Activated B cell treated with CpG ODN at 0.5 μM for 24 hours (primary cell): ENCODE measurements at regions of chr6 and their contacts with region 1.

Region 1: DNA sequence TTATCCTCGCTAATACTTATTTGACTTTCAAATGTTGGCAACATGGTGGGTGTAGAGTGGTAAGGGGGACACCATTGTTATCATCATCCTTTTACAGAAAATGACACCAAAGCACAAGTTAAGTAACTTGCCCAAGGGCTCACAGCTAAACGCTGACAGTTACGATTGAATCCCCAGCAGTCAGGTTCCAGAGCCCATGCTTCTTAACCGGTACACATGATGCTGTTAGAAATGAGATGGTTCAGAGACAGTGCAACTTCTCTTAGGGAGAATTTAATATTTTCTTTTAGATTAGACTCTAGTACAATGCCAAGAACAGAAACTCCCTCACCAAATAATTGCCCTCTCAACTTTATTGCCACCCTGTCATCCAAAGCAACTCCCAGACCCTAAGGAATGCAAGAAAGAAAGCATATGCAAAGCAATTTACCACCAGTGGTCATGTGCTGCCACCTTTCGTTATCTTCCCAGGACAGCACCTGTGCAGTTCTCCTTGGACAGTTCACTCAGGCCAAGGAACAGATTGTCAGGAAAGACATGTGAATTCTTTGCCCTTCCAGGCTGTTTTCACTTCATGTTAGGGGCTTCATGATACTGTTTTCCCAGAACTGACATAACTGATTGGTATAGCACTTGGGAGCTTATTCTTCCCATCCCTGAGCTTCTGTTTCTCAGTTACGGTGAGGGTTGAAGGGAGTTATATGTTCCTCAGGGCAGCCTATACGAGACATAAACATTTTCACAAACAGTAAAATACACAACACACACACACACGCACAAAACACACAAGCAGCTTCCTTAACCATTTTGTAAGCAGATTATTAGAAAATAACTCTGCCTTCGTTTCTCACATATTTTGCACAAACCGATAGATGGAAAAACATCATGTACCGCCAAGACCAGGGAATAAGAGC is 5.1 kb downstream of the HLA-DMA start:
- DNase-seq: no peak
- ATAC-seq: no peak
- H3K4me3 Mint-ChIP-seq: peak overlapping the region; percentile 98
- H3K27ac Mint-ChIP-seq: peak overlapping the region; percentile 99
- H3K4me1 Mint-ChIP-seq: peaks cover 94% of the 10 kb centered on the region
- H3K27me3 Mint-ChIP-seq: no peaks in the 10 kb centered on the region
- CTCF ChIP-seq: no peak

Region 2: DNA sequence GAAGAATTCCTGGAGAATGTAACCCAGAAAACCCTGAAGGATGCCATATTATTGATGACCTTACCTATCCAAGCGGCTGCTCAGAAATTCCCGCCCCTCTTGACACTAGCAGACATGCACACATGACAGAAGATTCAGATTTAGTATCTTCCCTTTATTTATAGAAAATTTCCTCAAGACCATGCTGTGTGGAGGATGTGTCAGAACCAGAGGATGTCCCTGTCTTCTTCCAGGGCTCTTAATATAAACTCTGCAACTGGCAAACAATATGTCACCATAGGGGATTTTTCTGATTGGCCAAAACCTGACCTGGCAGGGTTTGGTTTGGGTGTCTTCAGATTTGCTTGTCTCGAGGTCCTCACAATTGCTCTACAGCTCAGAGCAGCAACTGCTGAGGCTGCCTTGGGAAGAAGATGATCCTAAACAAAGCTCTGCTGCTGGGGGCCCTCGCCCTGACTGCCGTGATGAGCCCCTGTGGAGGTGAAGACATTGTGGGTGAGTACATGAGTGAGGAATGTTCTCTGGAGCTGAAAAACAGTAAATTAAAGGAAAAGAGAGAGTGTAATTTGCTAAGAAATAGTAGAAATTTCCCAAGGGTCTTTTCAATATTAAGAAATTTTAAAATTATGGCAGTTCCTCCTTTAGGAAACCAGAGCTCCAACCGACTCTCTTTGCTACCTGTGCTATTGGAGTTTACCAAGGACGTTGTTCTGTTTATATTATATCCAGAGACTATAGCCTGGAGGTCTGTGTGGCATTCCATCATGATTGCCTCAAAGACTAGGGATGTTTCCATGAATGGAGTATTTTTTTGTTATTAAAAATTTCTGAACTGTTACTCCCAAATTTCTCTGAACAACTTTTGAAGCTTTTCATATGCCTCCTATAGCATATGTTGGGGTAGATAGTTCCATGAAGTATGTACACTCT is 206.5 kb before region 1 on chr6 and contains the start of gene HLA-DQA2:
- CTCF ChIA-PET with region 1: no interaction called
- POLR2A ChIA-PET with region 1: no interaction called
- intact Hi-C with region 1: no loop called
- DNase-seq: peak; percentile 41
- ATAC-seq: peak; percentile 99
- H3K4me3 Mint-ChIP-seq: peak within 1 kb of the TSS; percentile 81
- H3K27ac Mint-ChIP-seq: peak within 1 kb of the TSS; percentile 83
- H3K4me1 Mint-ChIP-seq: peaks cover 6% of the 10 kb centered on the region
- H3K27me3 Mint-ChIP-seq: peaks cover 19% of the 10 kb centered on the region
- CTCF ChIP-seq: no peak
- total RNA-seq, gene HLA-DQA2: 231 and 237 TPM in 2 replicates

Region 3: GRCh38 chr6:32885698-32886286 is 62.0 kb before region 1 on chr6:
- CTCF ChIA-PET with region 1: interaction called, 47 read pairs
- POLR2A ChIA-PET with region 1: interaction called, 14 read pairs
- intact Hi-C with region 1: loop called (anchors 1 kb)
- DNase-seq: no peak
- ATAC-seq: peak; percentile 68
- H3K4me3 Mint-ChIP-seq: no peak overlapping the region
- H3K27ac Mint-ChIP-seq: no peak overlapping the region
- H3K4me1 Mint-ChIP-seq: peaks cover 27% of the 10 kb centered on the region
- H3K27me3 Mint-ChIP-seq: no peaks in the 10 kb centered on the region
- CTCF ChIP-seq: no peak

Region 4: GRCh38 chr6:33417903-33418689 is 470.3 kb after region 1 on chr6 and contains the start of gene CUTA:
- CTCF ChIA-PET with region 1: no interaction called
- POLR2A ChIA-PET with region 1: no interaction called
- intact Hi-C with region 1: no loop called
- DNase-seq: peak; percentile 92
- ATAC-seq: peak; percentile 90
- H3K4me3 Mint-ChIP-seq: peak within 1 kb of the TSS; percentile 91
- H3K27ac Mint-ChIP-seq: peak within 1 kb of the TSS; percentile 96
- H3K4me1 Mint-ChIP-seq: peaks cover 66% of the 10 kb centered on the region
- H3K27me3 Mint-ChIP-seq: no peaks in the 10 kb centered on the region
- CTCF ChIP-seq: no peak
- total RNA-seq, gene CUTA: 111 and 120 TPM in 2 replicates